K562 (cell line): ENCODE measurements at regions of chr3 and their contacts with region 1.

Region 1: GRCh38 chr3:46427916-46428833 is 21.1 kb downstream of the CCRL2 start:
- DNase-seq: peak in 2 of 4 experiments; percentile 57 to 78
- ATAC-seq: peak; percentile 96
- H3K4me3 ChIP-seq: no peak overlapping the region
- H3K27ac ChIP-seq: no peak overlapping the region
- H3K4me1 ChIP-seq: peaks cover 3 to 16% of the 10 kb centered on the region in 2 experiments; a peak in 4 of 5 replicates
- H3K27me3 ChIP-seq: peaks cover 0 to 4% of the 10 kb centered on the region in 2 experiments; a peak in 2 of 5 replicates
- CTCF ChIP-seq: peak; percentile 39 to 72 (median 51)
- EP300 ChIP-seq: no peak; the same call in 1 of the 2 replicates
- POLR2A ChIP-seq: no peak
- RAD21 ChIP-seq: peak; percentile 74 to 88

Region 2: DNA sequence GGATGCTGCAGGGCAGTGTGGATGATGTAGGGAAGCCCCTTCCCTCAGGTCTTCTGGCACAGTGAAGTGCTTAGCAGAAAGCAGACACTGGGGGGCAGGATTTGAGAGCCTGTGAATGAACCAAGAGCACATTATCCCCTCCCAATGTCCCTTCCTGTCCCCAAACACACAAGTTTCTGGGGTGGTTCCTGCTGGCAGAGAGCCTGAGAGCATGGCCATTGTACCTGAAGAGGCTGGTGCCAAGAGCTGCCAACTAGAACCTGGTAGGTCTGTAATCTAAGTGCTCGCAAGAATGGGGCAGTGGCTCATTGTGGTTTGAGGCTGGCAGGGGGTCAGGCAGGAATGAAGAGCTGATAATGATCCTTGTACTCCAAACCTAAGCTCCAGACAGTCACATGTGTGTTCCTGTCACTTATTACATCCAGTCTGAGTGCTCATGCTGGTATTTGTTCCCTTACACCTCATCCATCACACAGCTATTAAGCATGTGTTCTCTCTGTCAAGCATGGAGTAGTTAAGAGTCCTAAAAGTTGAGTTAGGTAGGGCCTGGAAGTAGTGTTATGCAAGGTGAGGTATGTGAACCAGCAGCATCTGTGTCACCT is 213.3 kb before region 1 on chr3:
- CTCF ChIA-PET with region 1: interaction called, 6 read pairs
- POLR2A ChIA-PET with region 1: interaction called, 3 read pairs
- in situ Hi-C with region 1: no loop called
- intact Hi-C with region 1: loop called (anchors 2 kb)
- DNase-seq: peak in 2 of 4 experiments; percentile 24 to 32
- ATAC-seq: peak; percentile 79
- H3K4me3 ChIP-seq: no peak overlapping the region
- H3K27ac ChIP-seq: no peak overlapping the region
- H3K4me1 ChIP-seq: no peaks in the 10 kb centered on the region
- H3K27me3 ChIP-seq: no peaks in the 10 kb centered on the region
- CTCF ChIP-seq: peak; percentile 49 to 60 (median 58)
- EP300 ChIP-seq: no peak
- POLR2A ChIP-seq: no peak
- RAD21 ChIP-seq: peak; percentile 59 to 68

Region 3: GRCh38 chr3:46293991-46294833 is 134.0 kb before region 1 on chr3:
- CTCF ChIA-PET with region 1: no interaction called
- POLR2A ChIA-PET with region 1: no interaction called
- in situ Hi-C with region 1: no loop called
- intact Hi-C with region 1: loop called (anchors 5 kb)
- DNase-seq: no peak
- ATAC-seq: no peak
- H3K4me3 ChIP-seq: no peak overlapping the region
- H3K27ac ChIP-seq: no peak overlapping the region
- H3K4me1 ChIP-seq: no peaks in the 10 kb centered on the region; a peak in 1 of 5 replicates
- H3K27me3 ChIP-seq: peaks cover 8 to 17% of the 10 kb centered on the region in 2 experiments
- CTCF ChIP-seq: no peak
- EP300 ChIP-seq: no peak
- POLR2A ChIP-seq: no peak
- RAD21 ChIP-seq: no peak

Region 4: GRCh38 chr3:46368569-46368968 is 59.6 kb before region 1 on chr3:
- CTCF ChIA-PET with region 1: no interaction called
- POLR2A ChIA-PET with region 1: no interaction called
- in situ Hi-C with region 1: no loop called
- intact Hi-C with region 1: loop called (anchors 5 kb)
- DNase-seq: peak in 1 of 4 experiments; percentile 33
- ATAC-seq: peak; percentile 86
- H3K4me3 ChIP-seq: no peak overlapping the region
- H3K27ac ChIP-seq: no peak overlapping the region
- H3K4me1 ChIP-seq: no peaks in the 10 kb centered on the region
- H3K27me3 ChIP-seq: peaks cover 30 to 48% of the 10 kb centered on the region in 2 experiments
- CTCF ChIP-seq: peak; percentile 36 to 54 (median 44); a peak in 5 of 6 replicates
- EP300 ChIP-seq: no peak
- POLR2A ChIP-seq: no peak
- RAD21 ChIP-seq: peak; percentile 69 to 76

Region 5: DNA sequence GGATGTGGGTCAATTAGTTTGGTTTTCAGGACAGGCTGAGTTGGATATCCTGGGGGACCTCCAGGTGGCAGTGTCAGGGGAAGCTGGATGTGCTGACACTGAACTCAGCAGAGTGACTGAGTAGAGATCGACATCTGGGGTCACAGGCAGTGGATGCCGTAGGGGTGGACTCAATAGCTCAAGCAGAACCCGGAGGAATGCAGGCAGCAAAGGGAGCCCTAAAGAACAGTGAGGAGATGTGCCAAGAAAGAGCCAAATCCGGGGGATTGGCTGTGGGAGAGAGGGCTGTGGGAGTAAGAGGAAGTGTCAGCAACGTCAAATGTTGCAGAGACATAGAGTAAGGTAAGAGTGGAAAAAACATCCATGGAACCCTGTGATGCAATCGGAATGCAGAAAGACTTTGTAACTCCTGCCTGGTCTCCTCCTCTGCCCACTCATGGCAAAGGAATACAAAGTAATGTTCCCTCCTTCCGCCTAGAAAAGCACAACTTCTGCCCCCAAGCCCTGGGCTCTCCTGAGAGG is 32.9 kb before region 1 on chr3:
- CTCF ChIA-PET with region 1: no interaction called
- POLR2A ChIA-PET with region 1: no interaction called
- in situ Hi-C with region 1: no loop called
- intact Hi-C with region 1: loop called (anchors 1 kb)
- DNase-seq: peak; percentile 48 to 59 (median 55)
- ATAC-seq: peak; percentile 88
- H3K4me3 ChIP-seq: no peak overlapping the region
- H3K27ac ChIP-seq: no peak overlapping the region
- H3K4me1 ChIP-seq: peaks cover 5 to 38% of the 10 kb centered on the region in 2 experiments
- H3K27me3 ChIP-seq: peaks cover 0 to 17% of the 10 kb centered on the region in 2 experiments; a peak in 2 of 5 replicates
- CTCF ChIP-seq: peak; percentile 57 to 65 (median 63)
- EP300 ChIP-seq: no peak
- POLR2A ChIP-seq: no peak
- RAD21 ChIP-seq: peak in 1 of 2 experiments; percentile 61; a peak in 2 of 4 replicates

Region 6: GRCh38 chr3:46558184-46559043 is 130.2 kb after region 1 on chr3:
- CTCF ChIA-PET with region 1: interaction called, 4 read pairs
- POLR2A ChIA-PET with region 1: no interaction called
- in situ Hi-C with region 1: no loop called
- intact Hi-C with region 1: loop called (anchors 1 kb)
- DNase-seq: peak; percentile 95 to 98 (median 98)
- ATAC-seq: peak; percentile 100
- H3K4me3 ChIP-seq: peak overlapping the region; percentile 28
- H3K27ac ChIP-seq: peak overlapping the region; percentile 21; the same call in 2 of the 3 replicates
- H3K4me1 ChIP-seq: peaks cover 11 to 12% of the 10 kb centered on the region in 2 experiments; a peak in 4 of 5 replicates
- H3K27me3 ChIP-seq: no peaks in the 10 kb centered on the region; a peak in 1 of 5 replicates
- CTCF ChIP-seq: peak; percentile 98 to 99 (median 99)
- EP300 ChIP-seq: peak; percentile 40; the same call in 1 of the 2 replicates
- POLR2A ChIP-seq: no peak
- RAD21 ChIP-seq: peak; percentile 100